B cell (primary cell): ENCODE measurements at regions of chr17 and their contacts with region 1.

Region 1: GRCh38 chr17:76547184-76547641 is 7.4 kb downstream of the PRCD start:
- DNase-seq: peak; percentile 78
- ATAC-seq: peak; percentile 90
- H3K4me3 ChIP-seq: no peak overlapping the region
- H3K4me3 Mint-ChIP-seq: no peak overlapping the region
- H3K27ac ChIP-seq: no peak overlapping the region
- H3K27ac Mint-ChIP-seq: no peak overlapping the region
- H3K4me1 ChIP-seq: peaks cover 4 to 8% of the 10 kb centered on the region in 2 donors
- H3K4me1 Mint-ChIP-seq: peaks cover 7% of the 10 kb centered on the region
- H3K27me3 ChIP-seq: peaks cover 0 to 7% (median 3%) of the 10 kb centered on the region in 4 experiments
- H3K27me3 Mint-ChIP-seq: peaks cover 17% of the 10 kb centered on the region
- CTCF ChIP-seq: peak; percentile 66

Region 2: DNA sequence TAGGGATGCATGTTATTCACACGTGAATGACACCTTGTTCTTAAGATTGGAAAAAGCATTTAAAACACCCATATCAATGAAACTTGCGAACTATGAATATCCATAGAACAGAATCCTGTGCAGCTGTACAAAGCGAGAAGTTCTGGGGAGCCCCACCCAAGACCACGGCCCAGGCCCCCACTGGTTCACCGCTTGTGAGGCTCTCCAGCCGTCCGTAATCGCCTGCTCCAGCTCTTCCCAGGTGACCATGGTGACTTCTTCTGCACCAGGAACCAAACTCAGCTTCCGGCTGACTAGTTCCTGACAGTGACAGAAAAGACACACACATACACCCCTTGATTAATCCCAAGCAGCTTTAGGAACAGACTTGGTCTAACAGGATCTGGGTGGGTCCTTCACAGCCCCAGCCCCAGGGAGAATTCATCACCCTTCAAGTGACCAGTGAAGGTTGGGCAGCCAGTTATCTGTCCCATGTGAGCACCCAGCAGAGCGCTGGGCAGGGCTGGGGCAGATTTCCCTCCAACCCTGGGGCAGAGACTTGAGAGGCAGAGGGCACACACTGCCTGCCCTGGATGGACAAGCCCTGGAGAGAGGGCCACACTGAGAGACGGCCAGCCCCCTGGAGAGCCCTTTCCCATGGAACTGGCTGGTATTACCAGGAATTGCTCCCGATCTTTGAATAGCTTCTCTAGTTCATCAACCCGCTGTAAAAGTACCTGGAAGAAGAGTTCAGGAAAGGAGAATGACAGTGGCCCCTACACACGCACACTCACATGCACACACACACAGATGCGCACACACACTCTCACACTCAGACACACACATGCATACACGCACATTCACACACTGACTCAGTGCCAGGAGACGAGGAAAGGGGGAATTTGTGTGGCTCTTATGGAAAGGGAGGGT is 242.7 kb before region 1 on chr17:
- CTCF ChIA-PET with region 1: interaction called, 4 read pairs
- POLR2A ChIA-PET with region 1: no interaction called
- intact Hi-C with region 1: loop called (anchors 1 kb)
- DNase-seq: no peak
- ATAC-seq: no peak
- H3K4me3 ChIP-seq: no peak overlapping the region
- H3K4me3 Mint-ChIP-seq: no peak overlapping the region
- H3K27ac ChIP-seq: no peak overlapping the region
- H3K27ac Mint-ChIP-seq: no peak overlapping the region
- H3K4me1 ChIP-seq: no peaks in the 10 kb centered on the region
- H3K4me1 Mint-ChIP-seq: peaks cover 3% of the 10 kb centered on the region
- H3K27me3 ChIP-seq: no peaks in the 10 kb centered on the region
- H3K27me3 Mint-ChIP-seq: peaks cover 3% of the 10 kb centered on the region
- CTCF ChIP-seq: no peak

Region 3: DNA sequence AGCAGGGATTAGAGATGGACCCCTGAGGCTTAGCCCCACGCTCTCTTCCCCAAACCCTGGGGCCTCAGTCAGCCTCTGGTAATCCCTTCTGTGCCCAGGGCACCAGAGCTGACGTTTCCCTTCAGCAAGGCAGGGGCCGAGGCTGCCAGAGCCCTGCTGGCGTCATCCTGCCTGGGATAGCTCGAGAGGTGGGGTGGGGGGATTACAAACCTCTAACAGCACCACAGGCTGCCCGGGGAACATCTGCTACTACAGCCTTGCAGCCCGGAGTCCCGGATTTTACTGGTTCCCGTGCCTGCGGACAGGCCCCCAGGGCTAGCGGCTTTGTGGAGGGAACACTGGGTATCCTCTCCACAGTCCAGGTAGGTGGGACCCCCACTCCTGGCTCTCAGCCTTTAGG is 79.8 kb before region 1 on chr17 and contains the start of gene AANAT:
- CTCF ChIA-PET with region 1: interaction called, 5 read pairs
- POLR2A ChIA-PET with region 1: no interaction called
- intact Hi-C with region 1: loop called (anchors 5 kb)
- DNase-seq: no peak
- ATAC-seq: no peak
- H3K4me3 ChIP-seq: no peak within 1 kb of the TSS
- H3K4me3 Mint-ChIP-seq: no peak within 1 kb of the TSS
- H3K27ac ChIP-seq: peak within 1 kb of the TSS in 1 of 2 donors; percentile 23
- H3K27ac Mint-ChIP-seq: peak within 1 kb of the TSS; percentile 84
- H3K4me1 ChIP-seq: peaks cover 12 to 36% of the 10 kb centered on the region in 2 donors
- H3K4me1 Mint-ChIP-seq: peaks cover 35% of the 10 kb centered on the region
- H3K27me3 ChIP-seq: no peaks in the 10 kb centered on the region
- H3K27me3 Mint-ChIP-seq: no peaks in the 10 kb centered on the region
- CTCF ChIP-seq: no peak
- total RNA-seq, gene AANAT: 0.94 TPM in 1 of 2 replicates, not detected in the other

Region 4: GRCh38 chr17:76506408-76507349 is 40.5 kb before region 1 on chr17:
- CTCF ChIA-PET with region 1: interaction called, 18 read pairs
- POLR2A ChIA-PET with region 1: no interaction called
- intact Hi-C with region 1: loop called (anchors 5 kb)
- DNase-seq: peak; percentile 92
- ATAC-seq: peak; percentile 73
- H3K4me3 ChIP-seq: no peak overlapping the region
- H3K4me3 Mint-ChIP-seq: no peak overlapping the region
- H3K27ac ChIP-seq: no peak overlapping the region
- H3K27ac Mint-ChIP-seq: peak overlapping the region; percentile 50
- H3K4me1 ChIP-seq: peaks cover 14 to 28% of the 10 kb centered on the region in 2 donors
- H3K4me1 Mint-ChIP-seq: peaks cover 28% of the 10 kb centered on the region
- H3K27me3 ChIP-seq: no peaks in the 10 kb centered on the region
- H3K27me3 Mint-ChIP-seq: peaks cover 2% of the 10 kb centered on the region
- CTCF ChIP-seq: peak; percentile 87

Region 5: DNA sequence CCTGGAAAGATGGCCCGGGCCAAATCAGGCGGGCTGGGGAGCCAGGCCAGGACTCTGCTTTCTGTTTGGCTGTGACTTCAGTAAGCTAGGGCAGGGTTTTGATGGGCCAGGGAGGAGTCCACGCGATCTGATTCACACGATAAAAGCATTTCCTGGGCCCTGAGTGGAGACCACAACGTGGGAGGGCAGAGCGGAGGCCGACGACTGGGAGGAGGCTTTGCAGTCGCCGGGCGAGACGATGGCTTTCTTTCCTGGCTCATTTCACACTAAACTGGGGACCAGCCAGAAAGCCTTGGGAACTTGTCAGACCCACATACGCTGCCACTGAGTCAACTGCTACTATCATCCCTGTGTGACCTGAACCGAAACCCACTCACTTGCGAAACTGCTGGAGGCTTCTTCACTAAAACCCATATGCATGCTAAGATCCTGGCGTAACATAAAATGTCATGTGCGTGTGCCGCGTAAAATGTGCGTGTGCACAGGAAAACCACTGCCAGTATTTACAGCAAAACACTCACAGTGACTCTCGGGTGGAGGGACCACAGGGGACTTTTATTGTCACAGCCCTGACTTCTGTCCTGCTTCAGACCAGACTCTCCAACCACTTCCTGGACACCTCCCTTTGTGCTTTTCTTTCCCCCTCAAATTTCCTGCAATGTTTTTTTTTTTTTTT is 31.8 kb before region 1 on chr17:
- CTCF ChIA-PET with region 1: interaction called, 156 read pairs
- POLR2A ChIA-PET with region 1: interaction called, 3 read pairs
- intact Hi-C with region 1: no loop called
- DNase-seq: peak; percentile 93
- ATAC-seq: peak; percentile 87
- H3K4me3 ChIP-seq: peak overlapping the region in 4 of 5 experiments; percentile 21 to 38 (median 26)
- H3K4me3 Mint-ChIP-seq: peak overlapping the region; percentile 85
- H3K27ac ChIP-seq: peak overlapping the region; percentile 71 to 84
- H3K27ac Mint-ChIP-seq: peak overlapping the region; percentile 98
- H3K4me1 ChIP-seq: peaks cover 17 to 18% of the 10 kb centered on the region in 2 donors
- H3K4me1 Mint-ChIP-seq: peaks cover 31% of the 10 kb centered on the region
- H3K27me3 ChIP-seq: peaks cover 0 to 1% (median 0%) of the 10 kb centered on the region in 4 experiments
- H3K27me3 Mint-ChIP-seq: no peaks in the 10 kb centered on the region
- CTCF ChIP-seq: no peak

Region 6: GRCh38 chr17:76557368-76558197 is 10.4 kb after region 1 on chr17:
- CTCF ChIA-PET with region 1: interaction called, 43 read pairs
- POLR2A ChIA-PET with region 1: interaction called, 4 read pairs
- intact Hi-C with region 1: no loop called
- DNase-seq: peak; percentile 97
- ATAC-seq: peak; percentile 93
- H3K4me3 ChIP-seq: peak overlapping the region; percentile 76 to 94 (median 88)
- H3K4me3 Mint-ChIP-seq: peak overlapping the region; percentile 100
- H3K27ac ChIP-seq: peak overlapping the region; percentile 81 to 98
- H3K27ac Mint-ChIP-seq: peak overlapping the region; percentile 97
- H3K4me1 ChIP-seq: peaks cover 16 to 37% of the 10 kb centered on the region in 2 donors
- H3K4me1 Mint-ChIP-seq: peaks cover 63% of the 10 kb centered on the region
- H3K27me3 ChIP-seq: no peaks in the 10 kb centered on the region
- H3K27me3 Mint-ChIP-seq: no peaks in the 10 kb centered on the region
- CTCF ChIP-seq: peak; percentile 58